ENCODE measurements at regions of chr17 and their contacts with region 1.

Region 1: GRCh38 chr17:51957786-51958185 is 200.7 kb downstream of the CA10 start:
- DNase-seq: no peak
- H3K4me3 ChIP-seq: no peak overlapping the region
- H3K27ac ChIP-seq: no peak overlapping the region
- H3K4me1 ChIP-seq: no peaks in the 10 kb centered on the region
- H3K27me3 ChIP-seq: no peaks in the 10 kb centered on the region
- CTCF ChIP-seq: no peak
- POLR2A ChIP-seq: no peak

Region 2: DNA sequence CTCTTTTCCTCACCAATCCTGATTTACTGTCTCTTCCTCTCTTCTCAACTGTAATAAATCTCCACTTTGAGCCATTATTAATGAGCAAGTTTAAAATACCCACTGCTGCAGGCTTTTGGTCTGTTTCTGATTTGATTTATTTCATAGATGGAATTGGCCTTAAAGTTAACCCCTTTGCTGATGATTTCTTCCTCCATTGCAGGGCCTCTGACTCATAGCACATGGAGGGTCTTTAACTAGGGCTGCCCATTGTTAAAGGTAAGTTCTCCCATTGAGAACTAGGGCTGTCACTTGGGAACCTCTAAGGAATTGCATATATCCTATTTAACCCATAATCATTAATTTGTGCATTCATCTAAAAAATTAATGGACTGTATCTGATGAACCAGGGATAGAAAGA is 20.5 kb before region 1 on chr17:
- intact Hi-C with region 1: loop called (anchors 2 kb)
- DNase-seq: no peak
- H3K4me3 ChIP-seq: no peak overlapping the region
- H3K27ac ChIP-seq: no peak overlapping the region
- H3K4me1 ChIP-seq: no peaks in the 10 kb centered on the region
- H3K27me3 ChIP-seq: no peaks in the 10 kb centered on the region
- CTCF ChIP-seq: no peak
- POLR2A ChIP-seq: no peak

Region 3: GRCh38 chr17:52027620-52028295 is 70.0 kb after region 1 on chr17:
- intact Hi-C with region 1: no loop called
- DNase-seq: no peak
- H3K4me3 ChIP-seq: no peak overlapping the region
- H3K27ac ChIP-seq: no peak overlapping the region
- H3K4me1 ChIP-seq: no peaks in the 10 kb centered on the region
- H3K27me3 ChIP-seq: no peaks in the 10 kb centered on the region
- CTCF ChIP-seq: no peak
- POLR2A ChIP-seq: no peak

Region 4: GRCh38 chr17:52048137-52048898 is 90.5 kb after region 1 on chr17:
- intact Hi-C with region 1: no loop called
- DNase-seq: no peak
- H3K4me3 ChIP-seq: no peak overlapping the region
- H3K27ac ChIP-seq: no peak overlapping the region
- H3K4me1 ChIP-seq: no peaks in the 10 kb centered on the region
- H3K27me3 ChIP-seq: peaks cover 0 to 4% (median 0%) of the 10 kb centered on the region in 7 donors
- CTCF ChIP-seq: no peak
- POLR2A ChIP-seq: no peak